ENCODE measurements at regions of chr1 and their contacts with region 1.

Region 1: GRCh38 chr1:40096977-40097782 is at the start of gene PPT1:
- H3K4me3 Mint-ChIP-seq: peak within 1 kb of the TSS; percentile 95
- H3K27ac Mint-ChIP-seq: peak within 1 kb of the TSS; percentile 93
- H3K4me1 Mint-ChIP-seq: peaks cover 35% of the 10 kb centered on the region
- H3K27me3 Mint-ChIP-seq: peaks cover 7% of the 10 kb centered on the region

Region 2: GRCh38 chr1:40161125-40161887 is 64.1 kb after region 1 on chr1 and contains the start of gene RLF:
- intact Hi-C with region 1: loop called (anchors 10 kb)
- H3K4me3 Mint-ChIP-seq: no peak within 1 kb of the TSS
- H3K27ac Mint-ChIP-seq: no peak within 1 kb of the TSS
- H3K4me1 Mint-ChIP-seq: peaks cover 11% of the 10 kb centered on the region
- H3K27me3 Mint-ChIP-seq: peaks cover 2% of the 10 kb centered on the region

Region 3: DNA sequence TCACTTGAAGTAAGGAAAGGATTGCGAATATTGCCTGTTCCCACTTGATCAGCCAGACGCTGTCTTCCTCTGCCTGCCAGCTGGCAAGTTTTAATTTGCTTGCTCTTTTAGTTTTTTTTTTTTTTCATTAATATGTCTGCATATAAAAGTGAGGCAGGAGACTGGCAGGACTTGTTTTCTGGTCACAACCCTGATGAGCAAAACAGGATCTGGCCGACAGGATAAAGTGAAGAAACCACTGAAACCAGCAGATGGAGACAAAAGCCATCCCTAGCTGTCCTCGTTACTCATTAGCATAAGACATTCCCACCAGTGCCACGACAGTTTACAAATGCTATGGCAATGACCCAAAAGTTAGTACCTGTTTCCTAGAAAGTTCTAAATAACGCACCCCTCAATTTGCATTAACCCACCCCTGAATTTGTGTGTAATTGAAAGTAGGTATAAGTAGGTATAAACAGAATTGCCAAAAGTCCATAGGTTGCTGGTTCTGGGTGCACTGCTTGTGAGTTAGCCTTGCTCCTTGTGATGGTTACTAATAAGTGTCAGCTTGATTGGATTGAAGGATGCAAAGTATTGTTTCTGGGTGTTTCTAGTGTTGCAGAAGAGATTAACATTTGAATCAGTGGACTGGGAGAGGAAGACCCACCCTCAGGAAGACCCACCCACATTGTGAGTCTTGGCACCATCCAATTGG is 495.1 kb after region 1 on chr1:
- intact Hi-C with region 1: no loop called
- H3K4me3 Mint-ChIP-seq: no peak overlapping the region
- H3K27ac Mint-ChIP-seq: no peak overlapping the region
- H3K4me1 Mint-ChIP-seq: peaks cover 28% of the 10 kb centered on the region
- H3K27me3 Mint-ChIP-seq: peaks cover 5% of the 10 kb centered on the region

Measured in dendritic cell treated with granulocyte-macrophage colony-stimulating factor and Interleukin-4, amounts not matched to agents 40 ng/mL and 50 ng/mL, for 4 days (primary cell).